ENCODE measurements at regions of chr9 and their contacts with region 1.

Region 1: GRCh38 chr9:132240753-132241493 is 79.1 kb downstream of the NTNG2 start:
- DNase-seq: peak; percentile 66
- ATAC-seq: peak; percentile 93
- H3K4me3 ChIP-seq: peak overlapping the region; percentile 69; the same call in 1 of the 2 replicates
- H3K27ac ChIP-seq: no peak overlapping the region
- H3K4me1 ChIP-seq: peaks cover 3% of the 10 kb centered on the region
- H3K27me3 ChIP-seq: peaks cover 0 to 6% of the 10 kb centered on the region in 2 experiments; a peak in 1 of 4 replicates
- CTCF ChIP-seq: no peak
- EP300 ChIP-seq: no peak
- POLR2A ChIP-seq: peak; percentile 55
- RAD21 ChIP-seq: no peak

Region 2: DNA sequence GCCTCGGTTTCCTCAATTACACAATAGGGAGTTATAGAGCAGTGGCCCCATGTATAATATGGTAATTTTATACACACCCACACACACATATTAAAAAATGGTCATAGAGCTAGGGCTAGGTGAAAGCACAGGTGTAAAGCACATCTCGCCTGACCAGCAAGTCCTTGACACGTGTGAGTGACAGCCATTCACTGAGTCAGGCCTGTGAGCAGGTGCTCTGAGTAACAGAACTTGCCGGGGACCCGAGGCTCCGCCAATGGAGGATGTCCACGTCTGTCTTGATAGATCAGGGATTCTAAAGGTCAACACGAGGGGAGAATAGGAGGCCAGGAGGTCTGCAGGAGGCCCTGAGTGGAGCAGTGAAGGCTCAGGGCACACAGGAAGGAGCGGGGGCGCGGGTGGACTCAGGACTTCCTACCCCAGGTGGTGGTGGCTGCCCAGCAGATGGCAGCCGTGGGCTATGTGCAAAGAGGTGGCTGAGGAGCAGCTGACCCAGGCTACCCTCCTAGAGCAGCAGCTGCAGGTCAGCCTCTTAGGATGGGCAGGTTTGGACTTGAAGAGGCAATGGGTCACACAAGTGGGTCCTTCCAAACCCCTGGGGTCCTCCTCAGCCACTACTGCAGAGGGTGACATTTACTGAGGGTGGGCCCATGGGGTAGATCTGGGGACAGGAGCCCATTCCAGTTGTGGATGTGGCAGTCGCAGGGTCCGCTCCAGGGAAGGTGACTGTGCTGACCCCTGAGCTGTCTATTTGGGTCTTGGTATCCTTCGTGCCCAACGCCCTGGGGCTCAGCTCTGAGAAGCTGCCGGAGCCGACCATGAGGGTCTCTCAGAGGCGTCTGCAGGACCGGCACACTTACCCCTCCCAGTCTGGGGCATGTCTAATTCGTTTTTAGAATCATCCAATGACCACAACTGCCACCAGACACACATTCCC is 649.7 kb before region 1 on chr9:
- CTCF ChIA-PET with region 1: no interaction called
- POLR2A ChIA-PET with region 1: no interaction called
- RAD21 ChIA-PET with region 1: no interaction called
- SMC1A ChIA-PET with region 1: no interaction called
- in situ Hi-C with region 1: loop called (anchors 25 kb)
- intact Hi-C with region 1: no loop called
- DNase-seq: peak; percentile 21
- ATAC-seq: peak; percentile 98
- H3K4me3 ChIP-seq: no peak overlapping the region
- H3K27ac ChIP-seq: no peak overlapping the region
- H3K4me1 ChIP-seq: no peaks in the 10 kb centered on the region
- H3K27me3 ChIP-seq: no peaks in the 10 kb centered on the region
- CTCF ChIP-seq: peak; percentile 73 to 97 (median 86)
- EP300 ChIP-seq: no peak
- POLR2A ChIP-seq: 0 out of 2 replicates have a peak, but pooled peaks have one; percentile 53
- RAD21 ChIP-seq: peak; percentile 78

Region 3: GRCh38 chr9:131755541-131756198 is 485.3 kb before region 1 on chr9:
- CTCF ChIA-PET with region 1: interaction called, 35 read pairs
- POLR2A ChIA-PET with region 1: interaction called, 3 read pairs
- RAD21 ChIA-PET with region 1: interaction called, 4 read pairs
- SMC1A ChIA-PET with region 1: interaction called, 10 read pairs
- in situ Hi-C with region 1: no loop called
- intact Hi-C with region 1: loop called (anchors 1 kb)
- DNase-seq: no peak
- ATAC-seq: peak; percentile 99
- H3K4me3 ChIP-seq: no peak overlapping the region
- H3K27ac ChIP-seq: no peak overlapping the region
- H3K4me1 ChIP-seq: no peaks in the 10 kb centered on the region
- H3K27me3 ChIP-seq: no peaks in the 10 kb centered on the region; a peak in 2 of 4 replicates
- CTCF ChIP-seq: peak; percentile 87 to 95 (median 94)
- EP300 ChIP-seq: no peak
- POLR2A ChIP-seq: no peak
- RAD21 ChIP-seq: peak; percentile 53

Region 4: GRCh38 chr9:132169672-132170392 is 71.1 kb before region 1 on chr9:
- CTCF ChIA-PET with region 1: interaction called, 155 read pairs
- POLR2A ChIA-PET with region 1: no interaction called
- RAD21 ChIA-PET with region 1: interaction called, 22 read pairs
- SMC1A ChIA-PET with region 1: interaction called, 22 read pairs
- in situ Hi-C with region 1: no loop called
- intact Hi-C with region 1: loop called (anchors 1 kb)
- DNase-seq: no peak
- ATAC-seq: peak; percentile 91
- H3K4me3 ChIP-seq: no peak overlapping the region
- H3K27ac ChIP-seq: no peak overlapping the region
- H3K4me1 ChIP-seq: no peaks in the 10 kb centered on the region
- H3K27me3 ChIP-seq: peaks cover 0 to 4% of the 10 kb centered on the region in 2 experiments
- CTCF ChIP-seq: peak; percentile 74 to 92 (median 83)
- EP300 ChIP-seq: no peak
- POLR2A ChIP-seq: no peak
- RAD21 ChIP-seq: peak; percentile 48; the same call in 1 of the 2 replicates

Region 5: GRCh38 chr9:132301521-132301920 is 60.6 kb after region 1 on chr9:
- CTCF ChIA-PET with region 1: no interaction called
- POLR2A ChIA-PET with region 1: no interaction called
- RAD21 ChIA-PET with region 1: no interaction called
- SMC1A ChIA-PET with region 1: no interaction called
- in situ Hi-C with region 1: no loop called
- intact Hi-C with region 1: no loop called
- DNase-seq: no peak
- ATAC-seq: no peak
- H3K4me3 ChIP-seq: no peak overlapping the region
- H3K27ac ChIP-seq: no peak overlapping the region
- H3K4me1 ChIP-seq: no peaks in the 10 kb centered on the region
- H3K27me3 ChIP-seq: no peaks in the 10 kb centered on the region
- CTCF ChIP-seq: no peak
- EP300 ChIP-seq: no peak
- POLR2A ChIP-seq: no peak
- RAD21 ChIP-seq: no peak

Region 6: GRCh38 chr9:132451276-132451675 is 210.4 kb after region 1 on chr9:
- CTCF ChIA-PET with region 1: no interaction called
- POLR2A ChIA-PET with region 1: no interaction called
- RAD21 ChIA-PET with region 1: no interaction called
- SMC1A ChIA-PET with region 1: no interaction called
- in situ Hi-C with region 1: no loop called
- intact Hi-C with region 1: no loop called
- DNase-seq: no peak
- ATAC-seq: no peak
- H3K4me3 ChIP-seq: no peak overlapping the region
- H3K27ac ChIP-seq: no peak overlapping the region
- H3K4me1 ChIP-seq: no peaks in the 10 kb centered on the region
- H3K27me3 ChIP-seq: peaks cover 0 to 1% of the 10 kb centered on the region in 2 experiments; a peak in 1 of 4 replicates
- CTCF ChIP-seq: no peak
- EP300 ChIP-seq: no peak
- POLR2A ChIP-seq: no peak
- RAD21 ChIP-seq: no peak

Region 7: GRCh38 chr9:132498531-132499210 is 257.7 kb after region 1 on chr9:
- CTCF ChIA-PET with region 1: no interaction called
- POLR2A ChIA-PET with region 1: no interaction called
- RAD21 ChIA-PET with region 1: no interaction called
- SMC1A ChIA-PET with region 1: no interaction called
- in situ Hi-C with region 1: no loop called
- intact Hi-C with region 1: no loop called
- DNase-seq: no peak
- ATAC-seq: no peak
- H3K4me3 ChIP-seq: no peak overlapping the region
- H3K27ac ChIP-seq: no peak overlapping the region
- H3K4me1 ChIP-seq: no peaks in the 10 kb centered on the region
- H3K27me3 ChIP-seq: no peaks in the 10 kb centered on the region; a peak in 2 of 4 replicates
- CTCF ChIP-seq: no peak
- EP300 ChIP-seq: no peak
- POLR2A ChIP-seq: no peak
- RAD21 ChIP-seq: no peak